Right ventricle myocardium superior (tissue), 1 donor: ENCODE measurements at regions of chr1 and their contacts with region 1.

Region 1: GRCh38 chr1:154961497-154962262 is at the start of gene PYGO2:
- DNase-seq: peak; percentile 88
- ATAC-seq: peak; percentile 90
- total RNA-seq, gene PYGO2: 13.2 TPM

Region 2: DNA sequence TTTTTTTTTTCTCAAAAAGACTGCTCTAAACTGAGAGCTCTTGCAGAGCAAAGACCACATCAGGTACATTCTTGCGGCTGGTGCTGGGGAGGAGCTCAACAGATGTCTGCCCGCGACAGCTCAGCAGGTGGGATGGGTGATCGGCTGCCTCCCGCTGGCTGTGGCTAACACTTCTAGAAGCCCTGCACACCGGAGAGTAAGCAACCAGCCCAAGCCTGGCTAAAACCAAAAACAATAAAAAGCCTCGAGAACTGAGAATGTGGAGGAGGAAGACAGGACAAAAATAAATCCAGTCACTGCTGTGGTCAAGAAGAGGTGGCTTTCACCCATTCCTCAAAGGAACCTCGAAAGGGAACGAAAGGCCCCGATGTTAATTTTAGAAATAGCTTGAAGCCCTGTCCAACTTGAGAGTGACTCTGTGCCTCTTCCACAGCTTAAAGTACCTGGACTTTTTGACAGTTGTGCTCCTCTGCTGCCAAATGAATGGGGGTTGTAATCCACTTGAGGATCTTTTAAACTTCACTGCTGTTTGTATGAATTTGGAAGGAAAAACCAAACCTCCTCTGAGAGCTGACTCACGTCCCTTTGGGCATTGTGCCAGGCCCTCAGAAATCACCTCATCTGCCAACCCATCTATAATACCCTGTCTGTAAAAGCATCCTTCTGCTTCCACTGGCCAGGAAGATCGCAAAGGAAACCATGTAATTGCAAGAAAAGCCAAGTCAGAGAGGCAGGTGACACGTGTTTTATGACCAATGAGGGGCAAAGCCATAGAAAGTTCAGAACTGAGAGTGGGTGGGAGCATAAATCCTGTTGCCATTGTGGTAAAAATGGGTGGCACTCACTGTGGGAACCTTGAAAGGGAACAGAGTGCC is 170.2 kb before region 1 on chr1:
- intact Hi-C with region 1: no loop called
- DNase-seq: peak; percentile 34
- ATAC-seq: no peak

Region 3: DNA sequence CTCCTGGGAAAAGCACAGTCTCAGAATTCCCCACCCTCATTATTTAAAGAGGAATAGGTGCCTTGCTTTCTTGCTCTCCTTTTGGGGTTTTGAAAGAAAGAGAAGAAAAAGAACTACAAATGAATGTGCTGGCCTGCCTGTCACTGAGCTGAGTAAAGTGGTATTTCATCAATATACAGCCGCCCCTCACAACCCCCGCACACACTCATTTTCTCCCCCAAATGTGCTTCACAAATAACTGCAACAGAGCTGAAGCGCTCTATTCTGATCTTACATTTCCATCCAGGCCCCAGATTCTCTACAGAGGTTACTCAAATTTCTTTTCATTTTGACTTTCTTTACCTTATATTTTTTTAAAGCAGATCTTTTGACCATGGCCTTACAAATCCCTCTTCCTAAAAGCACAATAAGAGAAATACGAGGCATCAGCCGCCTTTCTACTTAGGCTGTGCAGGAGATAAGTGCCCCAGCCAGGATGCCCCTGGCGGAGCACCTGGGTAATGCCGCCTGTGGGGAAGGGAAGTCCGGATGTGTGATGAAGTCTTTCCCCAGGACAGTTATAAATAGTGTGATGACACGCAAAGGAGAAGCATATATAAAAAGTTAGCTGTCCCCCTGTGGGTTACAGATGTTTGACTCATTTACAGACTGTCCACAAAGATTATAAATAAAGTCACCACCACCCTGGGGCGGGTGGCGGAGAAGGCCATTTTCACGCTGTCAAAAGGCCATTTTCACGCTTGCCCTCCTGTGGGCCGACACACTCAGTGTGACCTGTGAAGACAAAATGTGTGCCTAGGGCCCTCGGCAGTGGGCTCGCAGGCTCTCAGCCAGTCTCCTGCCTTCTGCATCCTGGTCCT is 98.1 kb before region 1 on chr1:
- intact Hi-C with region 1: no loop called
- DNase-seq: no peak
- ATAC-seq: peak; percentile 45

Region 4: GRCh38 chr1:155063550-155064110 is 102.0 kb after region 1 on chr1 and contains the start of gene EFNA4:
- intact Hi-C with region 1: loop called (anchors 5 kb)
- DNase-seq: peak; percentile 88
- ATAC-seq: peak; percentile 94
- total RNA-seq, gene EFNA4: 2.6 TPM

Region 5: DNA sequence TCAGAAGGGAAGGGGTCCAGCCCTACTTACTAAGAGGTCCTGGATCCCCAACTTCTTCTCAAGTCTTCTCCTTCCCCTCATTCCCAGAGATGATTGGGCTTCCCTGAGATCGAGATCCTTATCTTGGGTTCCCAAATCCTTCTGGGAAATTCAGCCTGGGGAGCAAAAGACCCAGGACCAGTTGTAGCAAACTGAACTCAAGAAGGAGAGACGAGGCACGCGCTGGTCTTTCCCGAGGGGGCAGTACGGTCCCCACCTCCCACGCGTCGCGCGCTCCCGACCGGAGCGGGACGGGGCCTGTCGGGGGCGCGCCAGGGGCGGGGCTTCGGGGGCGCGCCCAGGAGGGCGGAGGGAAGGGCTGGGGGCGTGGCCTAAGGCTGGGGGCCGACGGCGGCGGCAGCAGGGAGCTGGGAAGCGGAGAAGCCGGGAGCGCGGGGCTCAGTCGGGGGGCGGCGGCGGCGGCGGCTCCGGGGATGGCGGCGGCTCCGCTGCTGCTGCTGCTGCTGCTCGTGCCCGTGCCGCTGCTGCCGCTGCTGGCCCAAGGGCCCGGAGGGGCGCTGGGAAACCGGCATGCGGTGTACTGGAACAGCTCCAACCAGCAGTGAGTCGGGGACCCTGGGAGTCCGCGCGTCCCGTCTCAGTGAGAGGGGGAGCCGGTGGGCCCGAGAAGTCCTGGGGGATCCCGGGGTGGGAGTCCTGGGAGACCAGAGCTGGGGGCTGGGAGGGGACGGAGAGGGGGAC is 117.0 kb after region 1 on chr1 and contains the start of gene EFNA3:
- intact Hi-C with region 1: no loop called
- DNase-seq: peak; percentile 80
- ATAC-seq: peak; percentile 84
- total RNA-seq, gene EFNA3: 0.75 TPM